Posterior cingulate gyrus (tissue), 11 donors: ENCODE measurements at regions of chr16 and their contacts with region 1.

Region 1: GRCh38 chr16:82263521-82264143 is 93.6 kb upstream of the MPHOSPH6 start:
- DNase-seq: peak; percentile 26 to 94 (median 74)

Region 2: GRCh38 chr16:82031116-82032084 is 232.2 kb before region 1 on chr16:
- intact Hi-C with region 1: no loop called
- DNase-seq: no peak

Region 3: DNA sequence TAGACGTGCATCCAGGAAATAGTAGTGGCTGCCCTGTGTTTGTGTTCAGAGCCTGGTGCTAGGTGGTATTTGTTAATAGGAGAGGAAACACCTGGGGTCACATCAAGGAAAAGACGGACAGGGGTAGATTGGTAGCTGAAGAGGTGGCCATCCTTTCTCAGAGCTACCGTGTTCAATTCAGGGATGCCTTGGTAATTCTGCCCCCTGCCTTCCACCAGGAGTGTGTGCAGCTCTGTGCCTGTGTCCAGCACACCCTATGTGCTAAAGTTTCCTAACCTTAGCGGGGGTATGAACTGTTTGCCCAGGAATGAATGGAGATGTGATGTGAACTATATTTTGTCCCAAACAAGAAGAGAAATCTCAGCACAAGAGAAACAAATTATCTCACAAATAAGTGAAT is 80.5 kb after region 1 on chr16:
- intact Hi-C with region 1: loop called (anchors 1 kb)
- DNase-seq: peak in 5 of 10 donors; percentile 18 to 87 (median 37)

Region 4: DNA sequence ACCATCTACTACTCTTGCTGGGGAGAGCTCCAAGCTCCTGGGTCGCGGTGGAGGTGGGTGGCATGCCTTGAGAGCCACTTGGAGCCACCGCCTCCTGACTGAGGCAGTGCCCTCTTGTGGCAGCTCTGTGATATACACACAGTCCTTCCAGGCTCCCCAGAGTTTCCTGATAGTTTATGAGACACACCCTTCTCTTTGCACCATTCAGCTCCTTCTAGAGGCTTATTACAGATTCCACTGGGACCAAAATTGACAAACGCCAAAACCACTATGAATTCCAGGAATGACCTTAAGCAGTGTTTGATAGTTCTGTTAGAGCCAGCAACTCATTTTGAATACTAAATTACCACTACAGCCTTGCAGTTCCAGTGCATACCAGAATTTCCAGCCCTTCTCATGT is 193.1 kb after region 1 on chr16:
- intact Hi-C with region 1: loop called (anchors 5 kb)
- DNase-seq: peak; percentile 16 to 91 (median 54)